OCI-LY7 (cell line): ENCODE measurements at regions of chr9 and their contacts with region 1.

Region 1: DNA sequence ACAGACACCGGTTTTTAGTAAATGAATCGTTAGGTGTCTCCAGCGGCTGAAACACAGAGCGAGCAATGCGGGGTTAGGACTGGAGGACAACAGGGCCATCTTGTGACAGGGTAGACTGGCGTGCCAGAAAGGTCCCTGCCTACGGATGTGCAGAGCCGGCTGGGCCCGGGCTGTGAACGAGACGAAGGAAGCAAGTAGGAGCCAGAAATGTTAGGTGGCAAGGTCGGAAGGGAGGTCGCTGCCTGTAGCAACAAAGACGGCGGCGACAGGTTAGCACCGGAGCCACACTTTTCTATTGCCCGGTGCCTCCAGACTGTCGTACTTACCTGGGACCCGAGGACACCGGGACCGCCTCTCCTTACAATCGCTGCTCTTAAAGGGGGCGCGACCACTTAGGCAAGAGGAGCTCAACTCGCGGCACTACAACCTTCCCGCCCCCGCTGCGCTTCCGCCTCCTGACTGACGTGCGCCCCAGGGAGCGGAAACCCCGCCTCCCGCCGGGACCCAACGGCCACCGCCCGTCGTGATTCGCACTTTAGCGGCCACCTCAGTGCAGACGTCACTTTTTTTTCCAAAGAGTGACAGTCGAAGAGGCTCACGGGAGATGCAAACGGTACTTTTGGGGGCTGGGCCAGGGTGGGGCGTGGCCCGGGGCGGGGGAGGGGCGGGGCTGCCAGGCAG is at the start of gene INIP:
- DNase-seq: peak; percentile 99
- H3K4me3 ChIP-seq: peak within 1 kb of the TSS; percentile 86
- H3K27ac ChIP-seq: peak within 1 kb of the TSS; percentile 83
- H3K4me1 ChIP-seq: peaks cover 16% of the 10 kb centered on the region
- CTCF ChIP-seq: peak; percentile 59
- total RNA-seq, gene INIP: 23.2 and 27.0 TPM in 2 replicates

Region 2: GRCh38 chr9:111896353-111896958 is 821.3 kb before region 1 on chr9 and contains the start of gene UGCG:
- CTCF ChIA-PET with region 1: no interaction called
- POLR2A ChIA-PET with region 1: no interaction called
- intact Hi-C with region 1: loop called (anchors 10 kb)
- DNase-seq: peak; percentile 91
- H3K4me3 ChIP-seq: peak within 1 kb of the TSS; percentile 97
- H3K27ac ChIP-seq: peak within 1 kb of the TSS; percentile 82
- H3K4me1 ChIP-seq: peaks cover 42% of the 10 kb centered on the region
- CTCF ChIP-seq: no peak
- total RNA-seq, gene UGCG: 12.0 and 14.7 TPM in 2 replicates

Region 3: GRCh38 chr9:112443200-112443599 is 274.6 kb before region 1 on chr9:
- CTCF ChIA-PET with region 1: no interaction called
- POLR2A ChIA-PET with region 1: interaction called, 3 read pairs
- intact Hi-C with region 1: loop called (anchors 2 kb)
- DNase-seq: peak; percentile 39
- H3K4me3 ChIP-seq: no peak overlapping the region
- H3K27ac ChIP-seq: no peak overlapping the region
- H3K4me1 ChIP-seq: peaks cover 12% of the 10 kb centered on the region
- CTCF ChIP-seq: peak; percentile 79

Region 4: GRCh38 chr9:112629671-112630485 is 87.9 kb before region 1 on chr9:
- CTCF ChIA-PET with region 1: no interaction called
- POLR2A ChIA-PET with region 1: no interaction called
- intact Hi-C with region 1: no loop called
- DNase-seq: no peak
- H3K4me3 ChIP-seq: no peak overlapping the region
- H3K27ac ChIP-seq: no peak overlapping the region
- H3K4me1 ChIP-seq: no peaks in the 10 kb centered on the region
- CTCF ChIP-seq: no peak

Region 5: GRCh38 chr9:112680731-112681402 is 36.9 kb before region 1 on chr9:
- CTCF ChIA-PET with region 1: no interaction called
- POLR2A ChIA-PET with region 1: no interaction called
- intact Hi-C with region 1: no loop called
- DNase-seq: no peak
- H3K4me3 ChIP-seq: no peak overlapping the region
- H3K27ac ChIP-seq: no peak overlapping the region
- H3K4me1 ChIP-seq: no peaks in the 10 kb centered on the region
- CTCF ChIP-seq: no peak

Region 6: GRCh38 chr9:112731971-112732370 is 14.2 kb after region 1 on chr9:
- CTCF ChIA-PET with region 1: interaction called, 6 read pairs
- POLR2A ChIA-PET with region 1: interaction called, 30 read pairs
- intact Hi-C with region 1: no loop called
- DNase-seq: no peak
- H3K4me3 ChIP-seq: no peak overlapping the region
- H3K27ac ChIP-seq: no peak overlapping the region
- H3K4me1 ChIP-seq: no peaks in the 10 kb centered on the region
- CTCF ChIP-seq: no peak

Region 7: DNA sequence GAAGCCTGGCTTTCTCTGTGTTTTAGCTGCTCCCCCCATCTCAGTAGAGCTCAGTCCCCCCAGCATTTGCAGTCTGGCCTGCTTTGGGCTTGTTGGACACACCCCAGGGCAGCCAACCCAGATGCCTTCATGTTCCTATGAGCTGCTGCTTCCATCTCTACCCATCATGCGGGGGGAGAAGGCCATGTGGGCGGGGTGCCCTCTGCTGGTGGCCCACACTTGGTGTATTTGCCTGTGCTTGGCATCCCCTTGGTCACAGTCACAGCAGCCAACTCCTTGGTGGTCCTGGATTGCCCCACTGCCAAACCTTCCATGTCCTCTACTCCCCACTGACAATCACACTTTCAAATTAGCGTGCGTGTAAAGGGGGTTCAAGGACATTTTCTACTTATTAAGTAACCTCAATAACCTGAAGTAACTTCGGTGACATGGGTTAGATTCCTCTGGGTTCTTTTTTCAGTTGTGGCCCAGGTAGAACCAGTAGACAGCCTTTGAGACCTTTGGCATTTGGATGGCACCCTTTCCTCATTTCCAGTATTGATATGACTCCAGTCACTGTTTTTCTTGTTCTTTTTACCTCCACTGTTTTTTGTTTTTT is 75.5 kb after region 1 on chr9:
- CTCF ChIA-PET with region 1: no interaction called
- POLR2A ChIA-PET with region 1: interaction called, 3 read pairs
- intact Hi-C with region 1: loop called (anchors 1 kb)
- DNase-seq: peak; percentile 80
- H3K4me3 ChIP-seq: no peak overlapping the region
- H3K27ac ChIP-seq: no peak overlapping the region
- H3K4me1 ChIP-seq: peaks cover 4% of the 10 kb centered on the region
- CTCF ChIP-seq: peak; percentile 94